Activated T-helper 1 cell treated with anti-CD3 and anti-CD28 coated beads, Interleukin-12 subunit alpha, Interleukin-12 subunit beta, Interleukin-2, Interleukin-4 antibody, amounts not matched to agents 30 ng/mL and 10 ng/mL and 1 ng/mL, durations not matched to agents 14 hours and 24 hours and 36 hours (primary cell): ENCODE measurements at regions of chr19 and their contacts with region 1.

Region 1: DNA sequence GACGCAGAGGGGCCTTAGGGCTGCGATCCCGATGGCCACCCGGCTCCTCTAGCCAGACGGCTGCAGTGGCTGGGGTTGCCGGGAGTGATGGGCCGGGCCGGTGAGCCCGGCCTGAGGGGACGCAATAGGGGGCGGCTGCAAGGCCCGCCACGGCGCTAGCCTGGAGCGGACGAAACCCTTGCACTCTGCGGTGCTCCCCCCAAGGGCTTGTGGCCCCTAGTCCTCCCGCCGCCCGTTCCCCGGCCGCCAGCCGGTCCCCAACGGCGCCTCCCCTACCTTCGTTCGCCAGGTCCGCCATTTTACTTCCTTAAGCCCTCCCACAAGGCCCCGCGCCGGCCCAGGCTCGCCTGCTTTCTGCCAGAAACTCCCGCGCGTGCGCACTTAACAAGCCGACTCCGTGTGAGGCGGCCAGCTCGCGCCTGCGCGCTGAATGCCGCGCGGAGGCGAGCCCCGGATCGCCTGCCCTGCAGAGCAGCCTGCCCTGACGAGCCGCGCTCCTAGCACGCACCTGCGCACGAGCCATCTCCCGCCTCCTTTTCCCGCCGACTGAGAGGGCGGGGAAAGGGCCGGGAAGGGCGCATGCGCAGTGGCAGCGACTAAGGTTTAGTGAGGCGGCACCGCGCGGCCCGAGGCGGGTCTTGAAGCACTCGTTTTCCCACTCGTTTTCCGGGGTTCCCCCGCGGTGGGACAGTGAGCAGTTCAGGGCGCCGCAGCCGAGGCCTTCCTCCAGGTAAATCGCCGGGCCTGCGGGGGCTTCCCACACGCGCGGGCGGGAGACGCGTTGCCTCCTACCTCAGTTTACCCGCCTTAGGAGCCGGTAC is at the start of gene RANBP3:
- DNase-seq: peak; percentile 100
- H3K4me3 Mint-ChIP-seq: peak within 1 kb of the TSS; percentile 98
- H3K27ac Mint-ChIP-seq: peak within 1 kb of the TSS; percentile 92
- H3K4me1 Mint-ChIP-seq: peaks cover 54% of the 10 kb centered on the region
- H3K27me3 Mint-ChIP-seq: no peaks in the 10 kb centered on the region
- total RNA-seq, gene RANBP3: 122 and 126 TPM in 2 replicates

Region 2: GRCh38 chr19:5719961-5720790 is 257.8 kb before region 1 on chr19 and contains the starts of genes CATSPERD and LONP1:
- intact Hi-C with region 1: loop called (anchors 2 kb)
- DNase-seq: peak; percentile 98
- H3K4me3 Mint-ChIP-seq: peak within 1 kb of the TSS; percentile 98
- H3K27ac Mint-ChIP-seq: peak within 1 kb of the TSS; percentile 96
- H3K4me1 Mint-ChIP-seq: peaks cover 25% of the 10 kb centered on the region
- H3K27me3 Mint-ChIP-seq: peaks cover 6% of the 10 kb centered on the region
- total RNA-seq, gene CATSPERD: not detected in 2 replicates
- total RNA-seq, gene LONP1: 180 and 186 TPM in 2 replicates

Region 3: DNA sequence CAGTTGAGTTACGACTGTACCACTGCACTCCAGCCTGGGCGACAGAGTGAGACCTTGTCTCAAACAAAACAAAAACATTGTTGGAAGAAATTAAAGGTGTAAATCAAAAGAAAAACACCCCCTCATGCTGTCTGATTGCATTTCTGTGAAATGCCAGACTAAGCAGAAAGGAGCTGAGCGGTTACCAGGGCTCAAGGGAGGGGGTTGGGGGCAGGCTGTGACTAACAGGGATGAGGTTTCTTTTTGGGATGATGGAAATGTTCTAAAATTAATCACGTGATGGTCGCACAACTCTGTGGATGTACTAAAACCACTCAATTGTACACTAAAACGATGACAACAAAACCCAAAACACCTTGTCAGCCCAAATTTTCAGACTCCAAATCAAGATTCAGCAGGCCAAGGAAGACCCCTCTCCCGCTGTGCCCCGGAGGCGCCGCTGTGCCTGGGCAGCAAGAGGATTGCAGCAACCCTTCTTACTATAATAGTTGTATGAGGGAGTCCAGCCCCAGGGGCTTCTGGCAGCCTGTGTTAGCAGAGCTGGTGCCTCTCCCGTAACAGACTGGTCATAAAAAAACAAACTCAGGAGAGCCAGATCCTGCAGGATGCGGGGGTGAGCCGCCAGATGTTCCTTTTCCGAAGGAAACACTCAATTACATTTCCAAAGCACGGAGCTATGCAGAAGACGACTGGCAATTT is 43.1 kb before region 1 on chr19:
- intact Hi-C with region 1: no loop called
- DNase-seq: no peak
- H3K4me3 Mint-ChIP-seq: no peak overlapping the region
- H3K27ac Mint-ChIP-seq: no peak overlapping the region
- H3K4me1 Mint-ChIP-seq: no peaks in the 10 kb centered on the region
- H3K27me3 Mint-ChIP-seq: no peaks in the 10 kb centered on the region

Region 4: DNA sequence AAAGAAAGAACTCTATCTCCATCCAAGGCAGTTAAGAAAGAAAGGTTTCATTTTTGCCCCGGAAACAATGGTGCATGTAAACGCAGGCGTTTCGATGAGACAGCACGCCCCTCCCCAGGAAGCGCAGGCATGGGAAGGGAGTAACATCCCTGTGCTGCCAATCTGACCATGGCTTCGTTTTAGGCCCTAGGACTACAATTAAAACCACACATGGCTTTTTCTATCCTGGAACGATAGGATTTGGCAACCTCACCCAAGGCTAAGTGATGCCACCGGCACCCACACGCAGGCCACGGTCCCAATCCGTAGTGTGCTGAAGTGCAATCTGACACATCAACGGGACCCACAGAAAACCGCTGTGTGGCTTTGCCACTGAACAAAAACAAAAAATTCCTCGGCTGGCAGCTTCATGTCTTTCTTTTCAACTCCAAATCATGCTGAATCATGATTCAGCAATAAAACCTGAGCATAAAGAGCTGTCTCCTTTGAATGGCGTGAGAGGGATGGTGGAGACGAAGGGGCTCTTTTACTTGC is 24.2 kb before region 1 on chr19:
- intact Hi-C with region 1: loop called (anchors 2 kb)
- DNase-seq: peak; percentile 24
- H3K4me3 Mint-ChIP-seq: peak overlapping the region; percentile 76
- H3K27ac Mint-ChIP-seq: peak overlapping the region; percentile 98
- H3K4me1 Mint-ChIP-seq: peaks cover 75% of the 10 kb centered on the region
- H3K27me3 Mint-ChIP-seq: no peaks in the 10 kb centered on the region

Region 5: DNA sequence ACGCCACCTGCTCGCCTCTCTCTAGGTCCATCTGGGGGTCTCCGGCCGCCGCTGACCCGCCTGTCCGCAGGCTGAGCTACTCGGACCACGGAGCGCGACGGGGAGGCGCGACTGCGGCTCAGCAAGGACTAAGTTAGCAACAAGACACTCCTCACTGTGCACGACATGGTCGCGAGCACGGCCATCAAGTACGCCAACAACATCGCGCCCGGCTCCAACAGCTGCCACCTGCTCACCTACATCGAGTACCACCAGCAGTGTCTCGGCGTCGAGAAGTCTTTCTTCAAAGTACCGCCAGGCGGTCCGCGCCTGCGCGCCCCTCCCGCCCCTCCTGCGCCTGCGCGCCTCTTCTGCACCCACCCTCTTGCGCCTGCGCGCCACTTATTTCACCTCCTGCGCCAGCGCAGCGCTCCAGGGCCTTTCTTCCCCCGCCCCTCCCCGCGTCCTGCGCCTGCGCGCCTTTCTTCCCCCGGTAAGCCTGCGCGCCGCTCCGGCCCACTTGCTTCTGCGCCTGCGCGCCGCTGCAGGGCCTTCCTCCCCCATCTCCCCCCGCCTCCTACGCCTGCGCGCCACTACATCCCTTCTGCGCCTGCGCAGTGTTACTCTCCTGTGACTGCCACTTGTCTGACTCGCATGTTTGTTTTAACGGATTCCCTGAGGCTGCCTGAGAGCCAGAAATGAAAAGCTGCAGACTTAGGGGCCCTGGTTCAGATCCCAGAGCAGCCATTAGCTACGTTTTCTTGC is 221.4 kb after region 1 on chr19:
- intact Hi-C with region 1: loop called (anchors 1 kb)
- DNase-seq: peak; percentile 99
- H3K4me3 Mint-ChIP-seq: peak overlapping the region; percentile 99
- H3K27ac Mint-ChIP-seq: peak overlapping the region; percentile 94
- H3K4me1 Mint-ChIP-seq: peaks cover 22% of the 10 kb centered on the region
- H3K27me3 Mint-ChIP-seq: peaks cover 2% of the 10 kb centered on the region